Posterior cingulate gyrus (tissue), 11 donors: ENCODE measurements at regions of chr6 and their contacts with region 1.

Region 1: GRCh38 chr6:115896538-115897129 is 164.1 kb downstream of the FRK start:
- DNase-seq: no peak

Region 2: DNA sequence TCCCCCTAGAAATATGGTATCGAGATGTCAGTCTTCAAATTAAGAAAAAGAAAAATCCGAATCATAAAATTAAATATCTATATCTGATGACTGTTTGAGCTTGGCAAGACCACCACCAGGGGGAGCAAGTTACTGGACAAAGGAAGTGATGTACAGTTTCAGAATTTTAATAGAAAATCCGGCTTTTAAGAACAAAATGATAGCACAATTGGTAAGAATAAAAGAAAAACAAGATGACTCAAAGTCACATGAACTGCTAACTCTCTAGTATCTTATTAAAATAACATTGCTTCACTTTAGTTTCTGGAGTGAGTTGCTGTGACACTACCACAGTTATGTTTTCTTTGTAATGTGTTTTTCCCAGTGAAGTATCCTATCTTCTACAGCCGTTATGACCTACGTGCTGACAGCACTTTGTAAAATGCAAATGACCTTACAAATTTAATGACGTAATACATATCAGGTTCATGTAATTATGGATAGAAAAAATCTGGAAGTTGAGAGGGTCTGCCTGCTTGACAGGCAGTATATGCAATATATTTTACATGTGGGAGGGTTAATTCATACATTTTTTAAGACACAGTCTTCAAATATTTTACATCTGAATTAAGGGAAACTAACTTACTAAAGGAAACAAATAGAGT is 1148.5 kb before region 1 on chr6:
- intact Hi-C with region 1: loop called (anchors 1 kb)
- DNase-seq: peak in 6 of 10 donors; percentile 34 to 75 (median 57)

Region 3: GRCh38 chr6:115945306-115945705 is 48.7 kb after region 1 on chr6:
- intact Hi-C with region 1: no loop called
- DNase-seq: no peak